Thyroid gland (tissue), 4 donors: ENCODE measurements at regions of chr12 and their contacts with region 1.

Region 1: GRCh38 chr12:56350661-56351060 is 9.2 kb downstream of the STAT2 start:
- DNase-seq: no peak
- H3K4me3 ChIP-seq: no peak overlapping the region
- H3K27ac ChIP-seq: no peak overlapping the region
- H3K4me1 ChIP-seq: no peaks in the 10 kb centered on the region
- H3K27me3 ChIP-seq: no peaks in the 10 kb centered on the region
- CTCF ChIP-seq: no peak
- POLR2A ChIP-seq: no peak

Region 2: DNA sequence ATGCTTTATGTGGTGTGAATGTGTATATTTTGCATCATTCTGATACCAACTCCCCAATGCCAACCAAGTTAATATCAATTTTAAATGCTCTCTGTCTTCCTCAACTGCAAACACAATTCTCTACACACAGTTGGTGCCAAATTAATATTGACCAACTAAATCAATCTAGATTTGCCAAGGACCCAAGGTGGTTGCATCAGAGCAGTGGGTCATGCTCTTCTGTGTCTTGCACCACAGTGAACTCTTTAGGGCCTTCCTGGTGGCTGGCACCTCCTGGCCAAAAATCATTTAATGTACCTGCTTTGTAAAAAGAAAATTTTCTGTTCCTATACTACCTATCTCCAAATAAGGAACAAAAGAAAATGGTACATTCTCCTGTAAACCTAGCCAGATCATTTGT is 69.8 kb before region 1 on chr12:
- intact Hi-C with region 1: no loop called
- DNase-seq: no peak
- H3K4me3 ChIP-seq: no peak overlapping the region
- H3K27ac ChIP-seq: no peak overlapping the region
- H3K4me1 ChIP-seq: no peaks in the 10 kb centered on the region
- H3K27me3 ChIP-seq: no peaks in the 10 kb centered on the region
- CTCF ChIP-seq: no peak
- POLR2A ChIP-seq: no peak

Region 3: GRCh38 chr12:56315622-56316473 is 34.8 kb before region 1 on chr12 and contains the start of gene CNPY2:
- intact Hi-C with region 1: loop called (anchors 5 kb)
- DNase-seq: peak; percentile 98
- H3K4me3 ChIP-seq: peak within 1 kb of the TSS; percentile 51 to 94 (median 86)
- H3K27ac ChIP-seq: peak within 1 kb of the TSS; percentile 84 to 89 (median 85)
- H3K4me1 ChIP-seq: peaks cover 9 to 17% of the 10 kb centered on the region in 2 donors
- H3K27me3 ChIP-seq: no peaks in the 10 kb centered on the region
- CTCF ChIP-seq: peak in 3 of 6 experiments; percentile 3 to 27 (median 16)
- POLR2A ChIP-seq: peak in 1 of 2 donors; percentile 82
- total RNA-seq, gene CNPY2: 107 to 129 (median 124) TPM